ENCODE measurements at regions of chr5 and their contacts with region 1.

Region 1: DNA sequence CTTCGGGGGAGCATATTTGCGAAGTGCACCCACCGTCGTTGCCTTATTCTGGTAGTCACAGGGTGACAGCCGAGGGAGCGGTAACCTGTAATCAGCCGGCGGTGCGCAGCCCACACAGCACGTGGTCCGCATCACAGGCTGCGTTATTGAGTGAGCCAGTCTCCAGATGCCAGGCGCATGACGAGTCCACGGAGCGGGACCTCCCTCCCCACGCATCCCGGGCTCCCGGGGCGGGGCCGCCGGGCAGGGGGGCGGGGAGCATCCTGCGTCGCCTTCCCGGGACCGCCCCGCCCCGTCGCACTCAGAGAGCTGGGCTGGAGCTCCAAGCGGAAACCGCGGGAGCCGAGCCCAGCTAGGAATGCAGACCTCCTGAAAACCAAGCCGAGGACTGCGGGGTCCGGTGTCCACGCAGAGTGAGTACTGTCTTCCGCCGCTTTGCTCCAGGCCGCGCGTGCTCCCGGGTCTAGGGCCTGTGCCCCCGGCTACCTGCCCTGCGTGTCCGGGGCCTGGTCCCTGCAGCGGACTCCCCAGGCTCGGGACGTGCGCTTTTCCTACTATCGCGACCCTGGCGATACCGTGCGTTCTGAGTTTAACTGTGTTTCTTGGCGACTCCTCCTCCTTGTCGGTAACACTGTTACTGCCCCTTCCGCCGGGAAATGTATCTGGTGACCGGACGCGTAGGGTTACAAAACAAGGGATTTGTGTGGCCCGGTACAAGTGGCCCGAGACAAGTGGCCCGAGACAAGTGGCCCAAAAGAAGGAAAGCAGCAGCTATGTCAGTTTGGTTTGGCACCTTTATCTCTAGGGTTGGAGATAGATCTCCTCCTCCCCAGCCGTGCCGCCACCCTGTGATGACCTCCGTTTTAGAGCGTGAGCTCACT is 40.6 kb downstream of the CAST start:
- DNase-seq: peak; percentile 83 to 99 (median 93)

Region 2: DNA sequence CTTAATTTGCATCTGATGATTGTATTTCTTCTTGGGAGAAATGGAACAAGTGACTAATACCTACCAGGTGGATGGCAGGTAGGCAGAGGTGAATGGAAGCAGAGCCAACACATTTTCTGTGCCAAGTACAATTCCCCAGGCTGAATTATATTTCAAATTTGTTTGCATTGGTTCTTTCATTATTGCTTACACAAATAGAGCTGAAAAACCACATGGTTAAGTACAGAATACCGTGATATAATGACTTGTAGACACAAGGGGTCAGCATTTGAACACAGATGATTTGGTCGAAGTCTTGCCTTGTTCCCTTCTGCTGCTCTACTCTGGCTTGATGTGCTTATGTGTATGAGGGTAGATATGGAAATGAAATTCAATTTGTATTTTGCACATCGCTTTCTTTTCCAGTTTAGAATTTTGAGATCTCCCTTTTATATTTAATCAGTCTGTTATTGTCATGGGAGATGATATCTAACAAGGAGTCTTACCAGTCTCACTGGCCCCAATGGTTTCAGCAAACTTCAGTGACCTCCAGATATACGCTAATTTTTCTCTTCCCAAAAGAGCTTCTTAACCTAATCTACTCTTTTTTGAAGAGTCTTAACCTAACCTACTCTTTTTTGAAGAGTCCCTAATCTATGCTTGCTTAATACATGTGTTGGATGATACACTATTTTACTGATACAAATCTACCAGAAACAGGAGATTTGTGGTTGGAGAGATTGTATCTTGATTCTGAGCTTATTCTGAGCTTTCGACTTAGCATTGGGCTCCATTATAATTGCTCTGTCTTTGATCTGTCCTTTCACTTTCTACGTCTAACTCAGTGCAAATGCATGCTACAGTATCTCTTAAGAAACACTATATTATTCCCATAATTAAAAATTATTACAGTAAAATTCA is 357.8 kb before region 1 on chr5:
- intact Hi-C with region 1: loop called (anchors 10 kb)
- DNase-seq: no peak

Region 3: DNA sequence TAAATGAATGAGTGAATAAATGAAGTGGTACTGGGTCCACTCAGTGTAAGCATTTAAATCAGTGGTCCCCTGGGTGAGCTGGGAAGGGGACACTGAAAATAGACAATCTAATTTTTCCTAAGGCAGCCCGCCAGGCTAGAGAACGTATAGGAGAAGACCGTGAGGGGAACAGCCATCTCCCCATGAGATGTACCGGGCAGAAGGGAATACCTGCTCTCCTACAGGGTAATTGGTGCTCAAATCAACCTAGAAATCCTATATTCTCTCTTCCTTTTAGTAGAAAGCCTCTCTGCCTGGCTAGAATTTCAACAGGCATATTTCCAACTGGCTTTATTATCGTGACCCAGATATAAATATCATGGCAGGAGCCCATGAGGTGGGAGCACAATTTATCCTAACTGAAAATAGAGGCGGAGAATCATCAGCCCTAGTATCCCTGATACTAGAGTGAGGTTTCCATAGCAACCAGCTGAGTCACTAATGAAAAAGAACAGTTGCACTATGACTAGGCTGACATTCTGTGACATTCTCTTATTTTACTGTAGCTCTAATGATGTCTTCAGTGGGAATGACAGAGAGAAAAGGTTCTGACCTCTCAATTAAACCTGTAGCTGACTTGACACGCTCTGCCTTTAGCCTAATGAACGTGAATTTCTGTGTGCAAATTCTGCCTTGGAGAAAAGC is 137.0 kb before region 1 on chr5:
- intact Hi-C with region 1: no loop called
- DNase-seq: no peak

Region 4: DNA sequence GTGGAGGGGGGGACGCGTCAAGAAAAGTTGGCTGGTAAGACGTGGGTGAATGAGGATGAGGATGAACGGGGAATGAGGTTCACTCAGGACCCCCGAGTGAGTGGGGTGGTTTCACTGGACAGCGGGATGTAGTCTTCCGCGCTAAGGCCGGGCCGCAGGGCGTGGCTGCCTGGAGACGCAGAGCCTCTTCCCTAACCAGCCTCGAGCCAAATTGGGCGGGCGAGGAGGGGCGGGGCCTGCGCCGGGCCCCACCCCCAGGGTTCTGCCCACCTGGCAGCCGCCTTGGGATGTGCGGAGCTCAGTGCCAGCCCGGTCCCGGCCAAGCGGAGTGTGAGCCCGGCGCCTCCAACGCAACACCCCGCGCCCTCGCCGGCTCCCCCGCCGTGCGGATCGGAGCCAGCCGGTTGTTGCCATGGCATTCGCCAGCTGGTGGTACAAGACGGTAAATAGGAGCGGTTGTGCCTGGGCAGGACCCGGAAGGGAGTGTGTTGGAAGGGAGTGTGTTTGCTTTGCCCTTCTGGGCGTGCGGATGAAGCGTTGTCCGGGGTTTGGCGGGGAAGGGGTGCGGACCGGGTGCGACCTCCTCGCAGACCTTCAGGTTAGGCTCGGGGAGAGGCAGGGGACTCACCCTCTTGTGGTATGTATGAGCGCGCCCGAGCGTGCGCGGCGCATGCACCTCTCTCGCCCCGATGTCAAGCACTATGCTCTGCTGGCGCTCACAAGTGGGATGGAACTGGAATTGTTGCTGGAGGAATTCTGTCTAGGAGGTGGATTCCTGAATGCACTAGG is 39.8 kb before region 1 on chr5:
- intact Hi-C with region 1: loop called (anchors 5 kb)
- DNase-seq: peak; percentile 83 to 99 (median 90)